Caco-2 (cell line): ENCODE measurements at regions of chr1 and their contacts with region 1.

Region 1: DNA sequence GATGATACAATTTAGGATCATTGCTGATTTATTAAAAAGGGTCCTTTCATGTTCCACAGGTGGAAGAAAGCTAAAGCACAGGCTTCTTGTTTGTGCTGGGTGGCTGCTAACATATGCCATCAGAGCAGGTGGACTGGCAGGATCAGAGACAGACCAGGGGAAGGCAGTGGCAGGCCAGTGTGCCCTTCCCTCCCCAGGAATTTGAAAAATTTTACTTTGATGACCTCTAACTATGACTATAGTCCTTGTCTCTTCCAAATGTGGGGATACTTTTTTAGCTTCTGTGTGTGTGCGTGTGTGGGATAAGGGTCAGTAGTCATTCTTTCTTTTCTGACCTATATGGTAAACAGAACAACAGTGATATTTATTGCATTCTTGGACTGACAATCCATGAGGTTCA is 49.9 kb downstream of the LHX9 start:
- DNase-seq: peak; percentile 36 to 49
- H3K4me3 ChIP-seq: no peak overlapping the region
- H3K4me3 Mint-ChIP-seq: peak overlapping the region; percentile 21
- H3K27ac Mint-ChIP-seq: peak overlapping the region; percentile 81
- H3K4me1 ChIP-seq: peaks cover 12% of the 10 kb centered on the region
- H3K4me1 Mint-ChIP-seq: peaks cover 23% of the 10 kb centered on the region
- H3K27me3 ChIP-seq: no peaks in the 10 kb centered on the region
- H3K27me3 Mint-ChIP-seq: no peaks in the 10 kb centered on the region
- CTCF ChIP-seq: no peak

Region 2: DNA sequence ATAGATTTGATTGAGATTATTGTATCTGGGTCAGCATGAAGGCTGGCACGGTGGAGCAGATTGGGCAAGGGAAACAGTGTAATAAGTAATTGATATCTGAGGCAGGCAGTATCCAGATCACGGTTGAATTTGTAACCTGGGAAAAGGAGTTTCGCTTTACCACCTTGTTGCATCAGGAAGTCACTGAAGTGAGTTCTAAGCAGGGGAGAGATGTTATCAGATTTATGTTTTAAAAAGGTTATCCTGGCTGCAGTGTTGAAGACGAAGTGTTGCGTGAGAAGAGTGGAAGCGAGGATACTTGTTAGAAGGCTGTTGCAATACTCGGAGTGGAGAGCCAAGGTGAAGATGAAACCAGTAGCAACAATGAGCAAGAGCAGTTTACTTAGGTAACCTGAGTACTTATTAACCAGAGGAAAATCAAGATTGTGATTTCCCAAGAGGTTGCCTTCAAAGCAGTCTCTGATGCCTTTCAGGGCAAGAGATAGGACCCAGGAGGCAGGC is 27.9 kb after region 1 on chr1:
- CTCF ChIA-PET with region 1: no interaction called
- POLR2A ChIA-PET with region 1: no interaction called
- intact Hi-C with region 1: loop called (anchors 2 kb)
- DNase-seq: peak; percentile 58 to 69
- H3K4me3 ChIP-seq: no peak overlapping the region
- H3K4me3 Mint-ChIP-seq: peak overlapping the region; percentile 50
- H3K27ac Mint-ChIP-seq: peak overlapping the region; percentile 88
- H3K4me1 ChIP-seq: peaks cover 19% of the 10 kb centered on the region
- H3K4me1 Mint-ChIP-seq: peaks cover 18% of the 10 kb centered on the region
- H3K27me3 ChIP-seq: no peaks in the 10 kb centered on the region
- H3K27me3 Mint-ChIP-seq: no peaks in the 10 kb centered on the region
- CTCF ChIP-seq: no peak